ENCODE measurements at regions of chr17 and their contacts with region 1.

Region 1: DNA sequence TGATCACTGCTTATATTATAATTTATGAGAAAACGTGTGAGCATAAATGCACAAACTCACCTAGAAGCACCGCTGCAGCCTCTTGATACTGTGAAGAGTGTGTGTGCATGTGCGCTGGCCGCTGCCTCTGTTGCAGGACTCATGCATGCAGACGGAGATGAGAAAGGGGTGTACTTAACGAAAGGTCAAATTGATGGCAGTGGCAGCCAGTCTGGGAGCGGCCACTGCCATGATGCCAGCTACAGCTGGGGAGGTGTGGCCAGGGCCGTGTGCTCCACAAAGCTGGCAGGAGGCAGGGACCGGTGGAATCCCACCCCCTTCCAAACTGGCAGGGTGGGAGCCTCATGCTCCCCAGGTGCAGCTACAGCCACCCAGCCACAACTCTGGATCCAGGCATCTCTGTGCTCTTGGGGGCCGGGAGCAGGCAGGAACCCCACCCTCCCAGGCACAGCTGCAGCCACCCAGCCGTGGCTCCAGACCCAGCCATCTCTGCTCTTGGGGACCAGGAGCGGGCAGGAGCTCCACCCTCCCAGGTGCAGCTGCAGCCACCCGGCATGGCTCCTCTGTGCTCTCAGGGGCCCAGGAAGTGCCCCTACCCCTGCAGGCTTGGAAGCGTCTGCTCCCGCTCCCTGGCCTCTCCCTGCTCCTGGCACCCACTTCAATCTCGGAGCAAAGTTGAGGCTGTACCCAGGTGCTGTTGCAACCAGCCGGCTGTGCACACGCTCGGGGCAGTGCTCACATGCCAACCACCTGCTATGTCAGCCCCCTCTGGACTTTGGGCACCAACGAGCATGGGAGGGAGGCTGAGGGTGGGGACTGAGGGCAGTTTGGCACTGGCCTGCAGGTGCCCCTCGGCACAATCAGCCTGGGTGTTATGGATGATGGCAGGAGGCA is 77.5 kb upstream of the CHMP6 start:
- DNase-seq: no peak
- ATAC-seq: no peak
- H3K4me3 Mint-ChIP-seq: peak overlapping the region; percentile 66
- H3K27ac Mint-ChIP-seq: peak overlapping the region; percentile 85
- H3K4me1 Mint-ChIP-seq: peaks cover 57% of the 10 kb centered on the region
- H3K27me3 Mint-ChIP-seq: no peaks in the 10 kb centered on the region
- CTCF ChIP-seq: no peak

Region 2: DNA sequence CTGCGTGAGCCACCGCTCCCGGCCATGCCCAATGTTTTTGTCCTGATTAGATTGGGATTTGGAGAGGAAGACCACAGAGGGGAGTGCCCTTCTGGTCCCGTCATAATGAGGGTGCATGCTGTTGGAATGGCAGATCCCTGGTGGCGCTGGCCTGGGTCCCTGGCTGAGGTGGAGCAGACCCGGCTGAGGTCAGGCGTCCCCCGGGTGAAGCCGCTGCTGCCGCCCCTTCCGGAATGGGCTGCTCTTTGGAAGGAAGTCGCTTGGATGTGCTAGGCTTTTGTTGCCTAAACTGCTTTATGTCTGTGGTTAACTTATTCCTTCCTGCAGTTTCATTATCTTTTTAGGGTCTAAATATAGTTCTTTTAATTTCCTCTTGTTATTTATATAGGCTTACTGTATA is 42.8 kb before region 1 on chr17:
- CTCF ChIA-PET with region 1: no interaction called
- POLR2A ChIA-PET with region 1: interaction called, 6 read pairs
- intact Hi-C with region 1: loop called (anchors 1 kb)
- DNase-seq: no peak
- ATAC-seq: no peak
- H3K4me3 Mint-ChIP-seq: peak overlapping the region; percentile 4
- H3K27ac Mint-ChIP-seq: no peak overlapping the region
- H3K4me1 Mint-ChIP-seq: peaks cover 31% of the 10 kb centered on the region
- H3K27me3 Mint-ChIP-seq: no peaks in the 10 kb centered on the region
- CTCF ChIP-seq: no peak

Region 3: GRCh38 chr17:80899402-80900268 is 14.5 kb before region 1 on chr17:
- CTCF ChIA-PET with region 1: interaction called, 14 read pairs
- POLR2A ChIA-PET with region 1: interaction called, 12 read pairs
- intact Hi-C with region 1: no loop called
- DNase-seq: no peak
- ATAC-seq: peak; percentile 36
- H3K4me3 Mint-ChIP-seq: no peak overlapping the region
- H3K27ac Mint-ChIP-seq: no peak overlapping the region
- H3K4me1 Mint-ChIP-seq: peaks cover 25% of the 10 kb centered on the region
- H3K27me3 Mint-ChIP-seq: no peaks in the 10 kb centered on the region
- CTCF ChIP-seq: no peak

Region 4: DNA sequence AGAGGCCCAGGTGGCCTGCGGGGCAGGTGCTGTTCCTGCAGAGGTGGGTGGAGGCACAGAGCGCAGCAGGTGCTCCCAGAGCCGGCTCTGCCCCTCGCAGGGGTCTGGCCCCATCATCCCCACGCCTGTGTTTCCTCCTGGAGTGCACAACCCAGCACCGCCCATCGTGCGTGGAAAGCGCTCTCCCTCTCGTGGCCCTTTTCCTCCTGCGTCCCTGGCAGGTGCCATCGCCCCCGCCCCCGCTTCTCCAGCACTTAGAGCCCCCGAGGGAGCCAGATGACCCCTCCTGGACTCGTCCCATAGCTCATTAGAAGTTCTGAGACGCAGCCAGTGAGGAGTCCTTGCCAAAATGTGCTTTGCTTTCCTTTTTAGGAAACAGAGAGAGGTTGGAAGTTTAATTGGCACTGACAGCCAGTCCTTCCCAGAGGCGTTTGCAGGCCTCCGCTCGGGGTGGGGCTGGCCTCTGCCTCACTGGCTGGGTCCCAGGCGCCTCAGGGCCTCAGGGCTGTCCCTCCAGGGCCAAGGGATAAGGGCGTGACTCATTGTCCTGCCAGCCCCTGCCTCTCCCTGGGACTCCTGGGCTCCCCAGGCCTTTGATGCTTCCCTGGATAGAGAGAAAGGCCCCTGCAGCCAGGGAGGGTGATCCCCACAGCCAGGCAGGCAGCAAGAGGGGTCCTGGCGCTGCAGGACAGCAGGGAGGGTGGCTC is 45.3 kb after region 1 on chr17:
- CTCF ChIA-PET with region 1: no interaction called
- POLR2A ChIA-PET with region 1: interaction called, 3 read pairs
- intact Hi-C with region 1: loop called (anchors 5 kb)
- DNase-seq: no peak
- ATAC-seq: no peak
- H3K4me3 Mint-ChIP-seq: no peak overlapping the region
- H3K27ac Mint-ChIP-seq: no peak overlapping the region
- H3K4me1 Mint-ChIP-seq: peaks cover 14% of the 10 kb centered on the region
- H3K27me3 Mint-ChIP-seq: no peaks in the 10 kb centered on the region
- CTCF ChIP-seq: no peak

Region 5: GRCh38 chr17:80970044-80970761 is 56.0 kb after region 1 on chr17:
- CTCF ChIA-PET with region 1: interaction called, 10 read pairs
- POLR2A ChIA-PET with region 1: interaction called, 4 read pairs
- intact Hi-C with region 1: no loop called
- DNase-seq: peak; percentile 58
- ATAC-seq: peak; percentile 91
- H3K4me3 Mint-ChIP-seq: peak overlapping the region; percentile 41
- H3K27ac Mint-ChIP-seq: peak overlapping the region; percentile 24
- H3K4me1 Mint-ChIP-seq: peaks cover 19% of the 10 kb centered on the region
- H3K27me3 Mint-ChIP-seq: peaks cover 4% of the 10 kb centered on the region
- CTCF ChIP-seq: no peak